CD8-positive, alpha-beta memory T cell (primary cell): ENCODE measurements at regions of chr4 and their contacts with region 1.

Region 1: GRCh38 chr4:82201805-82202641 is 171.8 kb downstream of the HNRNPD start:
- DNase-seq: peak; percentile 8 to 59 (median 16)
- H3K4me3 ChIP-seq: no peak overlapping the region
- H3K4me3 Mint-ChIP-seq: no peak overlapping the region
- H3K27ac ChIP-seq: no peak overlapping the region
- H3K27ac Mint-ChIP-seq: no peak overlapping the region
- H3K4me1 ChIP-seq: no peaks in the 10 kb centered on the region
- H3K4me1 Mint-ChIP-seq: no peaks in the 10 kb centered on the region
- H3K27me3 ChIP-seq: no peaks in the 10 kb centered on the region
- H3K27me3 Mint-ChIP-seq: peaks cover 7 to 28% of the 10 kb centered on the region in 2 donors

Region 2: DNA sequence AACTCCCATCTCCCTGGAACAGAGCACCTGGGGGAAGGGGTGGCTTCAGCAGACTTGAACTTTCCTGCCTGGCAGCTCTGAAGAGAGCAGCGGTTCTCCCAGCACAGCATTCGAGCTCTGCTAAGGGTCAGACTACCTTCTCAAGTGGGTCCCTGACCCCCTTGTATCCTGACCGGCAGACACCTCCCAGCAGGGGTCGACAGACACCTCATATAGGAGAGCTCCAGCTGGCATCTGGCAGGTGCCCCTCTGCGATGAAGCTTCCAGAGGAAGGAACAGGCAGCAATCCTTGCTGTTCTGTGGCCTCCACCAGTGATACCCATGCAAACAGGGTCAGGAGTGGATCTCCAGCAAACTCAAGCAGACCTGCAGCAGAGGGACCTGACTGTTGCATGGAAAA is 486.3 kb before region 1 on chr4:
- CTCF ChIA-PET with region 1: no interaction called
- POLR2A ChIA-PET with region 1: no interaction called
- DNase-seq: no peak
- H3K4me3 ChIP-seq: no peak overlapping the region
- H3K4me3 Mint-ChIP-seq: no peak overlapping the region
- H3K27ac ChIP-seq: no peak overlapping the region
- H3K27ac Mint-ChIP-seq: no peak overlapping the region
- H3K4me1 ChIP-seq: no peaks in the 10 kb centered on the region
- H3K4me1 Mint-ChIP-seq: peaks cover 0 to 1% (median 0%) of the 10 kb centered on the region in 3 donors
- H3K27me3 ChIP-seq: no peaks in the 10 kb centered on the region
- H3K27me3 Mint-ChIP-seq: peaks cover 9 to 32% of the 10 kb centered on the region in 2 donors

Region 3: GRCh38 chr4:82123934-82124333 is 78.1 kb before region 1 on chr4:
- CTCF ChIA-PET with region 1: interaction called, 16 read pairs
- POLR2A ChIA-PET with region 1: no interaction called
- DNase-seq: peak in 2 of 5 donors; percentile 21 to 50
- H3K4me3 ChIP-seq: no peak overlapping the region
- H3K4me3 Mint-ChIP-seq: no peak overlapping the region
- H3K27ac ChIP-seq: no peak overlapping the region
- H3K27ac Mint-ChIP-seq: peak overlapping the region in 2 of 8 donors; percentile 21 to 48
- H3K4me1 ChIP-seq: no peaks in the 10 kb centered on the region
- H3K4me1 Mint-ChIP-seq: peaks cover 0 to 8% (median 5%) of the 10 kb centered on the region in 3 donors
- H3K27me3 ChIP-seq: no peaks in the 10 kb centered on the region
- H3K27me3 Mint-ChIP-seq: peaks cover 0 to 2% of the 10 kb centered on the region in 2 donors

Region 4: GRCh38 chr4:82181789-82182188 is 20.2 kb before region 1 on chr4:
- CTCF ChIA-PET with region 1: no interaction called
- POLR2A ChIA-PET with region 1: no interaction called
- DNase-seq: no peak
- H3K4me3 ChIP-seq: no peak overlapping the region
- H3K4me3 Mint-ChIP-seq: no peak overlapping the region
- H3K27ac ChIP-seq: no peak overlapping the region
- H3K27ac Mint-ChIP-seq: no peak overlapping the region
- H3K4me1 ChIP-seq: no peaks in the 10 kb centered on the region
- H3K4me1 Mint-ChIP-seq: no peaks in the 10 kb centered on the region
- H3K27me3 ChIP-seq: no peaks in the 10 kb centered on the region
- H3K27me3 Mint-ChIP-seq: peaks cover 0 to 6% of the 10 kb centered on the region in 2 donors

Region 5: GRCh38 chr4:82525395-82525831 is 323.4 kb after region 1 on chr4:
- CTCF ChIA-PET with region 1: no interaction called
- POLR2A ChIA-PET with region 1: no interaction called
- DNase-seq: no peak
- H3K4me3 ChIP-seq: no peak overlapping the region
- H3K4me3 Mint-ChIP-seq: no peak overlapping the region
- H3K27ac ChIP-seq: no peak overlapping the region
- H3K27ac Mint-ChIP-seq: no peak overlapping the region
- H3K4me1 ChIP-seq: no peaks in the 10 kb centered on the region
- H3K4me1 Mint-ChIP-seq: no peaks in the 10 kb centered on the region
- H3K27me3 ChIP-seq: no peaks in the 10 kb centered on the region
- H3K27me3 Mint-ChIP-seq: peaks cover 11 to 35% of the 10 kb centered on the region in 2 donors